Caco-2 (cell line): ENCODE measurements at regions of chr12 and their contacts with region 1.

Region 1: GRCh38 chr12:65986047-65986446 is 144.5 kb downstream of the LLPH start:
- DNase-seq: no peak
- H3K4me3 ChIP-seq: no peak overlapping the region
- H3K4me3 Mint-ChIP-seq: no peak overlapping the region
- H3K27ac Mint-ChIP-seq: no peak overlapping the region
- H3K4me1 ChIP-seq: no peaks in the 10 kb centered on the region
- H3K4me1 Mint-ChIP-seq: peaks cover 4% of the 10 kb centered on the region
- H3K27me3 ChIP-seq: no peaks in the 10 kb centered on the region
- H3K27me3 Mint-ChIP-seq: no peaks in the 10 kb centered on the region
- CTCF ChIP-seq: no peak

Region 2: DNA sequence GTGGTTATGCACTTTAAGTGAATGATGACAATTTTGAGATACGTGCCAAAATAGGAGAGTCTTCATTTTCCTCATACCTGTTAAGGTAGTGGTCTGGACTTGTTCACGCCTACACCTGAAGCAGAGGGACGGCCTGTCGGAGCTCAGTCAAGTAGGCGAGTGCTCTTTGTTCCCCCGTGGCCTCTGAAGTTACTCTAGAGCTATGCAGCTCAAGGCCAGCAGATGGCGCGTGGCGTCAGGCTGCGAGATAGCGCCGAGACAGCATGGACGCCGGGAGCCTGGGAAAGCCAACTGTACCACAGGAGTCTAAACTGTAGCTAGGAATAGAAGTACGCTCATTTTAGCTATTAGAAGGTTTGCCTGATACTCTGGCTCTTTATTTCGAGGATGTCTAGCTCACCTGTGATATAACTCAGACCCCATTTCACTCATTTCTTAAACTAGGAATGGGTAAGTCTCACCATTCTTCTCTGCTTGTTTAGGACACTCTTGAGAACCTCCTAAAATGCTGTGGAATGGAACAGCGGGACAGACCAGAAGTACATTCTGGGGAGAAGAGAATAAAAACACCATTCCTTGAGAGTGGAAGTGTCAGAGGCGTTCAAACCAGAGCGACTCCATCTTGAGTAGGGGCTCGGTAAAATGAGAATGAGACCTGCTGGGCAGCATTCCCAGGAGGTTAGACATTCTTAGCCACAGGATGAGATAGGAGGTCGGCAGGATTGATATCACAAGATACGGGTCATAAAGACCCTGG is 429.2 kb before region 1 on chr12:
- CTCF ChIA-PET with region 1: interaction called, 6 read pairs
- POLR2A ChIA-PET with region 1: no interaction called
- intact Hi-C with region 1: loop called (anchors 5 kb)
- DNase-seq: peak; percentile 80 to 82
- H3K4me3 ChIP-seq: no peak overlapping the region
- H3K4me3 Mint-ChIP-seq: no peak overlapping the region
- H3K27ac Mint-ChIP-seq: no peak overlapping the region
- H3K4me1 ChIP-seq: peaks cover 9% of the 10 kb centered on the region
- H3K4me1 Mint-ChIP-seq: no peaks in the 10 kb centered on the region
- H3K27me3 ChIP-seq: no peaks in the 10 kb centered on the region
- H3K27me3 Mint-ChIP-seq: no peaks in the 10 kb centered on the region
- CTCF ChIP-seq: peak; percentile 81 to 85

Region 3: DNA sequence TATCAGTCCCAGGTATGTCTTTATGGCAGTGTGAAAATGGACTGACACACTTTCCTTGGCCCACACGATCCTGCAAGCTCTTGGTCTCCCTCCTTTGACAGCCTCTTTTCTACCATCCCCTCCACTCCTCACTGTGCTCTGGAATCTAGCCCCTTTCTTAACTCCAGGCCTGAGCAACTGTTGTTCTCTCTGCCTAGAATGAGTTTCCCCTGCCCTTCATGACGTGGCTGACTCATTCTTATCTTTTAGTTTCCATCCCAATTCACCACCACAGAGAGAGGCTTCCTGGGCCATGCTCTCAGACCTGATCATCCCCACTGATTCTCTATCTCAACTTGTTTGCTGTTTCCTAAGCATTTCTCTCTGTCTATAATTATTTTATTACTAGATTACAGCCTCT is 319.2 kb before region 1 on chr12:
- CTCF ChIA-PET with region 1: no interaction called
- POLR2A ChIA-PET with region 1: no interaction called
- intact Hi-C with region 1: no loop called
- DNase-seq: no peak
- H3K4me3 ChIP-seq: no peak overlapping the region
- H3K4me3 Mint-ChIP-seq: no peak overlapping the region
- H3K27ac Mint-ChIP-seq: no peak overlapping the region
- H3K4me1 ChIP-seq: no peaks in the 10 kb centered on the region
- H3K4me1 Mint-ChIP-seq: no peaks in the 10 kb centered on the region
- H3K27me3 ChIP-seq: no peaks in the 10 kb centered on the region
- H3K27me3 Mint-ChIP-seq: no peaks in the 10 kb centered on the region
- CTCF ChIP-seq: no peak

Region 4: DNA sequence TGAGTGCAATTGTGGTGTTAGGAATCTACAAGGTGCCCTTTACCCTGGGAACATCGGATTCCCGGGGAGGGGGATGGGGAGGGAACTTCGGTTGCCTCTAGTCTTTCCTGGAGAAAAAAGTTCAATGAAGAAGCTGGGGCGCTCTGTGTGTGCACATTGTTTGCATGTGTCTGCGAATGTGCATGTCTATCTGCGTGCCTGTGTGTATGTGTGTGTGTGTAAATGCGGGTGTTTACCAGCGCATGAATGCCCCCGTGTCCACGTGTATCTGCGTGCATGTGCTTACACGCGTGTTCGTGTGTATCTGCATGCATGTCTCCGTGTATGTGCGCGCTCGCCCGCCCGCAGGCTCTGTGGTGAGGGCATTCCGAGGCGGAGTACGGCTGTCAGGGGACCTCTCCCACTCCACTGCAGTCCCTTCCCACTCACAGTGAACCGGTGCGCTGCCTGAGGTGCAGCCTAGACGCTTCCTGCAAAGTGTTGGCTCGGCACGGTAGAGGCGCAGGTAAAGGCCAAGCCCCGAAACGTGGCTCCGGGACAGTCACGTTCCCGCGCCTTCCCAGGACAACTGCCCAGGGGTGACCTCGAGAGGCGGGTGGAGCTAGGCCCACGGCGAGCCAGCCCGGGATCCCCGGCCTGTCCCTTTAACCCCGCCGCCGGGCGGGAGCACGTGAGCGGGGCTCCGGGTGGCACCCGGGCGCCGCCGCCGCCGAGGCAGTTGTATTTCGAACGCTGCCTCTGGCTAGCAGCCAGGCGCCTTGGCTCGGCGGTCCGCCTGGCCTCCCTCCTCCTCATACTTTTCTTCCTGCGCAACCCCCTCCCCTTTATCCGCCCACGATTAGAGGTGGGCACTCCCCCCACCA is 162.3 kb before region 1 on chr12:
- CTCF ChIA-PET with region 1: no interaction called
- POLR2A ChIA-PET with region 1: no interaction called
- intact Hi-C with region 1: loop called (anchors 5 kb)
- DNase-seq: peak; percentile 61 to 76
- H3K4me3 ChIP-seq: peak overlapping the region; percentile 70
- H3K4me3 Mint-ChIP-seq: peak overlapping the region; percentile 97
- H3K27ac Mint-ChIP-seq: peak overlapping the region; percentile 84
- H3K4me1 ChIP-seq: peaks cover 10% of the 10 kb centered on the region; the same call in 1 of the 2 replicates
- H3K4me1 Mint-ChIP-seq: peaks cover 5% of the 10 kb centered on the region
- H3K27me3 ChIP-seq: no peaks in the 10 kb centered on the region
- H3K27me3 Mint-ChIP-seq: no peaks in the 10 kb centered on the region
- CTCF ChIP-seq: no peak

Region 5: DNA sequence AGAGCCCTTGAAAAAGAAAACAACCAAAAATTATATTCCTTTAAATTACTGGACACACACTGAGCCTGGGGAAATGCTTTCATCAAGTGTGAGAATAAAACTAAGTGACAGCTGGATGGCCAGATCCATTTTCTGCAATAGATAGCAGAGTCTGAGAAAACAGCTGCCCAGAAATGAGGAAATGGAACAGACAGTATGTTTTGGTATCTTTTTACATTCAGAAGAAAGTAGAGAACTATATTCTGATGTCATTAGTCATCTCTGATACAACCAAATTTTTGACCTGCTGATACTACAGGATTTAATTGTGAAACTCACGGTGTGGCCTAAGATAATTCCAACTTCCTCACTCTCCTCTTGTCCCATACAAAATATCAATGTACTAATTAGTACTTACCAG is 83.5 kb before region 1 on chr12:
- CTCF ChIA-PET with region 1: no interaction called
- POLR2A ChIA-PET with region 1: no interaction called
- intact Hi-C with region 1: no loop called
- DNase-seq: no peak
- H3K4me3 ChIP-seq: no peak overlapping the region
- H3K4me3 Mint-ChIP-seq: no peak overlapping the region
- H3K27ac Mint-ChIP-seq: no peak overlapping the region
- H3K4me1 ChIP-seq: peaks cover 20% of the 10 kb centered on the region
- H3K4me1 Mint-ChIP-seq: peaks cover 31% of the 10 kb centered on the region
- H3K27me3 ChIP-seq: no peaks in the 10 kb centered on the region
- H3K27me3 Mint-ChIP-seq: no peaks in the 10 kb centered on the region
- CTCF ChIP-seq: no peak

Region 6: DNA sequence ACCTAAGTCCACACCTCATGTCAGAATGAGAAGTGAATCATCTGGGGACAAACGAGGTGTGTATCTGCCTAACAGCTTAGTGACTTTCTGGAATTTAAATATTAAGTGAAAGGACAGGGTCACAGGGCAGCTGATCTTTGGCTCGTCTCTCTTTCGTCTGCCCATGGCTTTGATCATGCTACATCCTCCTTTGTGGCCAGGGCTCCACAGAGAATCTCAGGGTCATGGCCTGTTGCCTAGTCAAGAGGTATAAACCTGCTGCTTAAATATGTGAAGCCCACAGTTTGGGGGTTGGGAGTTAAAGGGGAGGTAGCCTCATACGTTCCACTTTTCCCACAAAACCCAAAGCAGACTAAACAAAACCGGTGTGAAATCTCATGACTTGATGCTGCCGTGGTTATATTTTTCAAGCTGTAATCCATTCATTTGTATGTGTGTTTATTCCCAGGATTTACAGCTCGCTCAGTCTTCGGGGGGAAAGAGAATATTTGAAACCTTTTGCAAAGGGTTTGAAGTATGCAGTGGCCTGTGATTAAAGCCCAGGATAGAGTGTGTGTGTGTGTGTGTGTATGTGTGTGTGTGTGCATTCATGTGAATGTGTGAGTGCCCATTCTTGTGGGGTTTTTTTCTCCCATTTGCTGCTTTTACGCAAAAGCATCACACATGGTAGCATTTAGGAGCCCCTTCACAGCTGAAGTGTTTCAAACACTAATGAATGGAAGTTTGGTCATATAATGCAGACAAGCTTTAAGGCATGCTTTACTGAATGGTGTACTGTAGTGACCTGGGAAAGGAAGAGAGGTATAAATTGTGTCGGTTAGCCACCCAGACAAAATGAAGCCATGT is 24.6 kb before region 1 on chr12:
- CTCF ChIA-PET with region 1: no interaction called
- POLR2A ChIA-PET with region 1: no interaction called
- intact Hi-C with region 1: loop called (anchors 2 kb)
- DNase-seq: peak; percentile 30 to 42
- H3K4me3 ChIP-seq: no peak overlapping the region
- H3K4me3 Mint-ChIP-seq: no peak overlapping the region
- H3K27ac Mint-ChIP-seq: no peak overlapping the region
- H3K4me1 ChIP-seq: peaks cover 32% of the 10 kb centered on the region
- H3K4me1 Mint-ChIP-seq: peaks cover 15% of the 10 kb centered on the region
- H3K27me3 ChIP-seq: no peaks in the 10 kb centered on the region
- H3K27me3 Mint-ChIP-seq: no peaks in the 10 kb centered on the region
- CTCF ChIP-seq: no peak